ENCODE measurements at regions of chr4 and their contacts with region 1.

Region 1: DNA sequence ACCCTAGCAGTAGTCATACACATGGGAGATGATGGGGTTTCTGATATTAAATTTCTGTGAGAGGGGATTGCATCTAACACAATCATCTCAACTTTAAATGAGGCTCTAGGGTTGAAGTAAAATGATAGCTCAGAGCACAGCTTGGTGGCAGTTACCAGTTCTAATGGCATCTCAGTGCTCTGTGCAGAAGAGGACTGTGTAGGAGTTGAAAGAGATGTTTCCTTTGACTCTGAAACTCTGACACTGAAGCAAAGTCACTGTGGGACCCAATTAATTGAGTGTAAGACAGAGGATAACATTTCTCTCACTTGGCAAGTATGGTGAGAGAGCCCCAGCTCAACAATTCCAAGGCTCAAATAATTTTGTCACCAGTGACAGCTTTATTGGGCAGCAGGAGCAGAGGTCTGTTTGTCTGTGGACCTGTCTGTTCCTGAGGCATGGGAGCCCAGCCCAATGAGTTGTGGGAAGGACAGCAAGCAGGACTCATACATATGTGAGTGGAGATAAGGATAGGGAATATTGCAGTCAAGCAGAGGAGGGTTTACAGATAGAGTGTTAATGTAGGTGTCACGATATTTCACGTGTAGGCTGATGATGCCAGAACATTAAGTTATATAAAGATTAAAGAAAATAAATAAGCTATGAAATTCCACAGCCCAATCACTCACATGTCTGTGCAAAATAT is 76.7 kb upstream of the NAF1 start:
- DNase-seq: no peak
- ATAC-seq: no peak
- H3K4me3 Mint-ChIP-seq: no peak overlapping the region
- H3K27ac Mint-ChIP-seq: no peak overlapping the region
- H3K4me1 Mint-ChIP-seq: no peaks in the 10 kb centered on the region
- H3K27me3 Mint-ChIP-seq: peaks cover 8% of the 10 kb centered on the region
- CTCF ChIP-seq: no peak

Region 2: GRCh38 chr4:162727232-162727631 is 516.2 kb before region 1 on chr4:
- CTCF ChIA-PET with region 1: no interaction called
- POLR2A ChIA-PET with region 1: no interaction called
- intact Hi-C with region 1: no loop called
- DNase-seq: no peak
- ATAC-seq: no peak
- H3K4me3 Mint-ChIP-seq: no peak overlapping the region
- H3K27ac Mint-ChIP-seq: no peak overlapping the region
- H3K4me1 Mint-ChIP-seq: no peaks in the 10 kb centered on the region
- H3K27me3 Mint-ChIP-seq: no peaks in the 10 kb centered on the region
- CTCF ChIP-seq: no peak

Region 3: DNA sequence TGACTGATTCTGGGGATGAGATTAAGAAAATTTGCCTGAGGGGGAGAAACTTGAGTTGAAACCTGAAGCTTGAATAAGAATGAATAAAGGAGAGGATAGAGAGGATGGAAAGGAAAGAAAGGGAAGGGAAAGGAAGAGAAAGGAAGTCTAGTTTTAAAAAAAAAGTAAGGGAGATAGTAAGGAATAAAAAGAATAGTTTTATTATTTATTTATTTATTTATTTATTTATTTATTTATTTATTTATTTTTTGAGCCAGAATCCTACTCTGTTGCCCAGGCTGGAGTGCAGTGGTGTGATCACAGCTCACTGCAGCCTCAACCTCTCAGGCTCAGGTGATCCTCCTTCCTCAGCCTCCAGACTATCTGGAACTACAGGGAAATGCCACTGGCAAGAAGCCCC is 14.8 kb before region 1 on chr4:
- CTCF ChIA-PET with region 1: no interaction called
- POLR2A ChIA-PET with region 1: no interaction called
- intact Hi-C with region 1: loop called (anchors 1 kb)
- DNase-seq: no peak
- ATAC-seq: no peak
- H3K4me3 Mint-ChIP-seq: no peak overlapping the region
- H3K27ac Mint-ChIP-seq: no peak overlapping the region
- H3K4me1 Mint-ChIP-seq: no peaks in the 10 kb centered on the region
- H3K27me3 Mint-ChIP-seq: no peaks in the 10 kb centered on the region
- CTCF ChIP-seq: no peak

Region 4: GRCh38 chr4:164023214-164023613 is 779.8 kb after region 1 on chr4:
- CTCF ChIA-PET with region 1: no interaction called
- POLR2A ChIA-PET with region 1: no interaction called
- intact Hi-C with region 1: no loop called
- DNase-seq: no peak
- ATAC-seq: no peak
- H3K4me3 Mint-ChIP-seq: no peak overlapping the region
- H3K27ac Mint-ChIP-seq: no peak overlapping the region
- H3K4me1 Mint-ChIP-seq: no peaks in the 10 kb centered on the region
- H3K27me3 Mint-ChIP-seq: no peaks in the 10 kb centered on the region
- CTCF ChIP-seq: no peak